Naive thymus-derived CD8-positive, alpha-beta T cell (primary cell): ENCODE measurements at regions of chr12 and their contacts with region 1.

Region 1: GRCh38 chr12:7933255-7933729 is 2.7 kb downstream of the SLC2A3 start:
- DNase-seq: peak; percentile 50 to 90 (median 78)
- ATAC-seq: peak; percentile 78 to 83
- H3K4me3 Mint-ChIP-seq: no peak overlapping the region
- H3K27ac Mint-ChIP-seq: no peak overlapping the region
- H3K4me1 Mint-ChIP-seq: peaks cover 12 to 38% (median 37%) of the 10 kb centered on the region in 4 donors
- H3K27me3 Mint-ChIP-seq: no peaks in the 10 kb centered on the region

Region 2: GRCh38 chr12:7769999-7770398 is 163.3 kb before region 1 on chr12:
- POLR2A ChIA-PET with region 1: no interaction called
- DNase-seq: no peak
- ATAC-seq: no peak
- H3K4me3 Mint-ChIP-seq: no peak overlapping the region
- H3K27ac Mint-ChIP-seq: no peak overlapping the region
- H3K4me1 Mint-ChIP-seq: no peaks in the 10 kb centered on the region
- H3K27me3 Mint-ChIP-seq: peaks cover 0 to 1% (median 0%) of the 10 kb centered on the region in 5 donors

Region 3: DNA sequence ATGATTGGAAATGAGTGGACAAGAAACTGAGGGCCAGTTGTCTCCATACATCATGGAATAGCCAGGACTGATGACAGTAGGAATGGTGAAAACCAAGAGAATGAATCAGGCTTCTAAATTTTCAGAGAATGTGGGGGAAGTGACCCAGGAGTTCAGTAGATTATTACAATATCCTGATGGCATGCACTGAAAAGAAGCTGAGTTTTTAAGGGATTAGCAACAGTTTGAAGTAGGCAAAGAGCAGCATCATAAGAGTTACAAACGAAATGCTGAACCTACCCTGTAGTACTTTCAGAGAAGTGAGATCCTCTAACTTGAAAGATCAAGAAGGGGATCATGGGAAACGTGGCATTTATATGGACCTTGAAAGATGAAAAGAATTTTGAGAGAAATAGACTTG is 73.7 kb before region 1 on chr12:
- POLR2A ChIA-PET with region 1: interaction called, 40 read pairs
- DNase-seq: no peak
- ATAC-seq: no peak
- H3K4me3 Mint-ChIP-seq: no peak overlapping the region
- H3K27ac Mint-ChIP-seq: peak overlapping the region in 4 of 10 donors; percentile 52 to 89 (median 71)
- H3K4me1 Mint-ChIP-seq: peaks cover 5 to 16% (median 9%) of the 10 kb centered on the region in 4 donors
- H3K27me3 Mint-ChIP-seq: no peaks in the 10 kb centered on the region

Region 4: DNA sequence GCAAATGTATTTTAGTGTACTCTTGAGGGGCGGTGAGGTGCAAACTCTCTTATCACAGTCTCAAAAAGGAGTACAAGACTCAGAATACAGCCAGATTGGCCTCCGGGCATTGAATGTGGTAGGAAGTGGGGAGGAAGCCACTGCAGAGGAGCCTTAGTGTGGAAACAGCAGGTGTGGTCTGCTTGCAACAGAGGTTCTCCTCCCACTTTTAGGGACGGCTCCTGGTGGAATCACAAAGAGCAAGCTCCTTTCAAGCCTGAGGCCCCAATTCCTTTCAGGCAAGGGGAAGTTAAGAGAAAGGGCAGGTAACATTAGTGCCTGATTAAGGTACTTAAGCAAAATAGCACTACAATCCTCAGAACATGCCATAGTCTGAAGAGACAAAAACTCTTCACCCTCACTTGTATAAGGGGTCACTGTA is 26.4 kb after region 1 on chr12:
- POLR2A ChIA-PET with region 1: interaction called, 311 read pairs
- DNase-seq: peak in 9 of 10 donors; percentile 11 to 71 (median 42)
- ATAC-seq: peak; percentile 40 to 52
- H3K4me3 Mint-ChIP-seq: peak overlapping the region; percentile 80 to 95 (median 91)
- H3K27ac Mint-ChIP-seq: peak overlapping the region; percentile 89 to 99 (median 97)
- H3K4me1 Mint-ChIP-seq: peaks cover 19 to 48% (median 40%) of the 10 kb centered on the region in 4 donors
- H3K27me3 Mint-ChIP-seq: no peaks in the 10 kb centered on the region

Region 5: DNA sequence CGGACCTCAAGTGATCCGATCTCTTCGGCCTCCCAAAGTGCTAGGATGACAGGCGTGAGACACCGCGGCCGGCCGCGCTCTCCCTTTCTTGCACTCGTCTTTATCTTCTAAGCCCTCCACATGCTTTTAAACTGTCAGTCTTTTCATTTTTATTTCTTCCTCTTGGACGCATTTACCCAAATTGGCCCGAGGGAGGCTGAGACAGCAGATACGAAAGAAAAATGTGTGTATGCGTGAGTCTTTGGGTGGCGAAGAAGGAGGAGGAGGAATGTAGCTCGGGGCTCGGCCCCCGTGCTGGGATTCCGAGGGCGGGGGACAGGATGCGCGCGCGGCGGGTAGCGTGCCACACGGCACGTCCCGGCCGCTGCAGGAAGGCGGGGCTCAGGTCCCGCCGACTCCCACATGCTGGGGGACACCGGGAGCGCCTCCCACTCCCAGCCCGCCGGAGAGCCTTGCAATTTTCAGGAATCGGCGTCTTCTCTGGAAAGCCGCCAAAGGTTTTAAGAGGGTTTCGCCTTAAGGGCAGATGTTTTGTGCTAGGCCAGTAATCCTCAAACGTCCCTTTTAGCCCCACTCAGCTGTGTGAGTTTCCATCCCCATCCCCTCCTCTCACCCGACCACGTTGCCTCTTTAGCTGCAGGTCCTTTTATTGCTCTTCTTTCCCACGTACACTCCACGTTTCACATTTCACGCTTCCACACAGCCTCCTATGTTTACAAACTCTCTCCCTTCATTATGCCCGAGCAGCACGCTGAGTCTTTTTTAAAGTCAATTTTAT is 37.4 kb after region 1 on chr12:
- POLR2A ChIA-PET with region 1: interaction called, 73 read pairs
- DNase-seq: peak; percentile 75 to 91 (median 82)
- ATAC-seq: peak; percentile 87 to 91
- H3K4me3 Mint-ChIP-seq: peak overlapping the region; percentile 79 to 92 (median 87)
- H3K27ac Mint-ChIP-seq: peak overlapping the region; percentile 94 to 99 (median 96)
- H3K4me1 Mint-ChIP-seq: peaks cover 10 to 33% (median 30%) of the 10 kb centered on the region in 4 donors
- H3K27me3 Mint-ChIP-seq: no peaks in the 10 kb centered on the region

Region 6: GRCh38 chr12:7995266-7995963 is 62.1 kb after region 1 on chr12:
- POLR2A ChIA-PET with region 1: interaction called, 62 read pairs
- DNase-seq: peak; percentile 53 to 94 (median 80)
- ATAC-seq: peak; percentile 100
- H3K4me3 Mint-ChIP-seq: no peak overlapping the region
- H3K27ac Mint-ChIP-seq: no peak overlapping the region
- H3K4me1 Mint-ChIP-seq: peaks cover 3 to 13% (median 9%) of the 10 kb centered on the region in 4 donors
- H3K27me3 Mint-ChIP-seq: no peaks in the 10 kb centered on the region

Region 7: DNA sequence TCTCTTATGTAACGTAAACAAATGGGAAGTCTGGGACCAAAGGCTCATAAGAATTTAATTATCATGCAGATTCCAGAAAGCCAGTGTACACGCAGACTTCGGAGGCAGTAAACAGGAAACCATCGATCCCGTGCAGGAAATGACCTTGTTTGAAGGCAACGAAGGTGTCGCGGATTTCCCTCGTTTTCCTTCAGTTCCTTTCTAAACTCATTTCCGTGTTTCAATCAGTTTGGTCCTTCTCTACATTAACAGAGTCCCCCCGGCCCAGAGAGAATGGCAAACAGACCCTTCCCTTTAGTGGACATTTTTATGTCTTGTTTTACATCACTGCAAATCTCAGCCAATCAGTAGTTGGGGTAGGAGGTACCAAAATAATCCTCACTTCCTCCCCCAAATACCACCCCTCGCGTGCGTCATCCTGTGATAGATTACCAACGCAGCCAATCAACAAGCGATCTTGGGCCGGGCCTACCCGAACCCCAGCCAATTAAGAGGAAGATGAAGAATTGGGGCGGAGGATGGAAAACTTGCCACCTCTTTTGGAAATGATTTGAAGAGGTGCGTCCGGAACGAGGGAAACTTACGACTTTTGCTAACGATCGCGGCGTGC is 93.1 kb after region 1 on chr12:
- POLR2A ChIA-PET with region 1: interaction called, 18 read pairs
- DNase-seq: peak; percentile 78 to 99 (median 97)
- ATAC-seq: peak; percentile 89 to 91
- H3K4me3 Mint-ChIP-seq: peak overlapping the region; percentile 89 to 98 (median 96)
- H3K27ac Mint-ChIP-seq: peak overlapping the region; percentile 99 to 100 (median 100)
- H3K4me1 Mint-ChIP-seq: peaks cover 3 to 20% (median 12%) of the 10 kb centered on the region in 4 donors
- H3K27me3 Mint-ChIP-seq: no peaks in the 10 kb centered on the region